AG04449 (cell line): ENCODE measurements at regions of chr3 and their contacts with region 1.

Region 1: GRCh38 chr3:141303481-141304223 is 64.7 kb upstream of the ZBTB38 start:
- DNase-seq: peak; percentile 41
- H3K4me3 ChIP-seq: no peak overlapping the region
- CTCF ChIP-seq: peak; percentile 49

Region 2: GRCh38 chr3:141039589-141039988 is 264.1 kb before region 1 on chr3:
- CTCF ChIA-PET with region 1: no interaction called
- POLR2A ChIA-PET with region 1: no interaction called
- DNase-seq: no peak
- H3K4me3 ChIP-seq: no peak overlapping the region
- CTCF ChIP-seq: no peak

Region 3: DNA sequence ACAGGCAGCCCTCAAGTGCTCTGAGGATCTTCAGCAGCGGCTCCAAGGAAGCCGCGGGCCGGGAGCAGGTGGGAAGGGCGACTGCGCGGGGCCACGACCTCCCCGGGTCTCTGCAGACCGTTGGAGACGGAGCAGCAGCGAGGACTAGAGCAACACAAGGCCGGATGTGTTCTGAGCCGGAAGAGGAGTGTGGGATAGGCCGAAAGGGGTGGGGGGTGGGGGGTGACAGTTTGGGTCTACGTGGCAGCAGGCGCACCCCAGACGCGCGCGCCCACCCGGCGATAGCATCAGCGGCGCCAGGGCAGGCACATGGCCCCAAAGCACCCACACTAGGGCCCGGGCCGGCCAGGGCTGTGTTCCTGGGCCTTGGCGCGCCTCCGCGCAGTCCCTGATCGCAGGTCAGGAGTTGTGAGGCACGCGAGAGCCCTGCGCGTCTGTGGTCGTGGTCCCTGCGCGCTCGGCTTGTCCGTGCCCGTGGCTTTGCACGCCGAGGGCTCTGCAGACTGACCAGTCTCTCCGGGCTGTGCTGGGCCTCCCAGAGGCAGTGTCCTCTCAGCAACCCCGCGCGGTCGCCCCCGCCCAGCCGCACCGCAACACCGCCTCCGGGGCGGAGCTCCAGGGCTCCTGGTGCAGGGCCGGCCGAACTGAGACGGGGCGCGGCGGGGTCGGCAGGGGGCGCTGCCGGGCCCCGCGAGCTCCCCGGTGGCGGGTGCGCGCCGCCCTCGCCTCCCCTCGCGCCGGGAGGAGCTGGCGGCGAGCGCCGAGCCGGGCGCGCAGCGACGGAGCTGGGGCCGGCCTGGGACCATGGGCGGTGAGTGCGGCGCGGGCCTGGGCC is 72.3 kb before region 1 on chr3 and contains the start of gene PXYLP1:
- CTCF ChIA-PET with region 1: interaction called, 44 read pairs
- POLR2A ChIA-PET with region 1: interaction called, 3 read pairs
- DNase-seq: no peak
- H3K4me3 ChIP-seq: peak within 1 kb of the TSS; percentile 71
- CTCF ChIP-seq: peak; percentile 57

Region 4: DNA sequence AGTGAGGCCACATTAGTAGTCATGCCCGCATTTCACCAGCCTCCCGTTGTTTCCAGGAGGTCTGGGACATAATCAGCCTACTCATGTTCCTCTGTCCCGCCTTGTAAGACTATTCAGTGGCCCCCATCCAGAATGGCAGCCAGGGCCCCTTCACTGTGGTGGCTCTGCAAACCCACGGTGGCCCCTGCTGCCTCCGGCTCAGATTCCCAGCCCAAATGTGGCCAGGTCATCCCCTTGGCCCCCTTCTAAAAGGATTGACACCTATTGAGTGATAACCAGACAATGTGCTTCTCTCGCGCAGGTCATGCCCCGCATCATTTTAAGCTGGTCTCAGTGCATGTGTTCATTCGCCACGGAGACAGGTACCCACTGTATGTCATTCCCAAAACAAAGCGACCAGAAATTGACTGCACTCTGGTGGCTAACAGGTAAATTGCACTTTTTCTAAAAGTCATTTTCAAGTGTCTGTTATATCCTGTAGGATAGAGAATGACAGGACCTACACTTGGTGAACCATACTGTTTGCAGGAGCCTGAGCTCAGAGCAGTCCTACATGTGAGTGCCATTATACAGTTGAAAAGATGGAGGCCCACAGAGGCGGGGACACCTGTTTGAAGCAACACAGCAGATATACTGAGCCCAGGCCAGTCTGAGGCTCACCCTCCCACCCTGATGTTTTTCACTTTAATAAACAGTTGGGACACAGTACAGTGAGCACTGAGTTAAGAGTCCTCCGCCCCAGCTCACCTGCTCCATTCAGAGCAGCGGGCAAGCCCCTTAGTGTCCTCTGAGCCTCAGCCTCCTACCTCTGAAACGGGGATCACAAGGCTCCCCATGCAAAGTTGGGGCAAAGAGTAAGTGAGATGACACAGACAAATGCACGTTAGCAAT is 24.3 kb before region 1 on chr3:
- CTCF ChIA-PET with region 1: interaction called, 40 read pairs
- POLR2A ChIA-PET with region 1: interaction called, 3 read pairs
- DNase-seq: no peak
- H3K4me3 ChIP-seq: no peak overlapping the region
- CTCF ChIP-seq: peak; percentile 31

Region 5: DNA sequence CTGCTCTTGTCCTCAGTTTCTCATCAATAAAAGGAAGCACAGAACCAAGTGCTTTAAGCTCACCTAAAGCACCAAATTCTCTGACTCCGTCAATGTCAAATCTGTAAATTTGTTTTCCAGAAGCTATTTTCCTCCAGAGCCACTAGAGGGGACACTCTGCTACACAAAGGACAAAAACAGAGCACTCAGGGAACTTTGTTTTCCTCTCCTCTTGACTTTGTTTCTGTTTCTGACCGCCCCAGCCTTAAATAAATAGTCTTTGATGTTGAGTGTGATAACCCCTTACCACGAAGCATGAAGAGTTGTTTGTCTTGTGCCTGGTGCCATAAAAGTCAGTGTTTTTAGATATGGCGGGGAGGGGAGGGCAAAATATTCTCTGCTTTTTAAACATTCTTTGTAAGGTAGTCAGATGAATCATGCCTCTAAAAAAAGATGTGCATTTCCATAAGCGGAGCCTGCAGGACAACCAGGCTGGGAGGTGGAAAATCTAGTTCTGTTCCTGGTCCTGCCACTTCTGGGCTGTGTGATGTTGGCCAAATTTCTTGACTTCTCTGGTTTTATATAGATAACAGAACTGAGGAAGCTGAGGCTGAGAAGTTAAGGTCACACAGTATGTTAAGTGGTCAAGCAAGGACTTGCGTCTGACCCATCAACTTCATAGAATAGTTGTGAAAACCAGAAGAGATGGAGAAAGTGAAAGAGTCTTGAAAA is 57.4 kb after region 1 on chr3:
- CTCF ChIA-PET with region 1: interaction called, 14 read pairs
- POLR2A ChIA-PET with region 1: no interaction called
- DNase-seq: peak; percentile 87
- H3K4me3 ChIP-seq: no peak overlapping the region; the same call in 1 of the 2 replicates
- CTCF ChIP-seq: peak; percentile 72

Region 6: GRCh38 chr3:141441381-141442364 is 138.0 kb after region 1 on chr3:
- CTCF ChIA-PET with region 1: interaction called, 14 read pairs
- POLR2A ChIA-PET with region 1: interaction called, 3 read pairs
- DNase-seq: peak; percentile 73
- H3K4me3 ChIP-seq: no peak overlapping the region
- CTCF ChIP-seq: peak; percentile 70

Region 7: DNA sequence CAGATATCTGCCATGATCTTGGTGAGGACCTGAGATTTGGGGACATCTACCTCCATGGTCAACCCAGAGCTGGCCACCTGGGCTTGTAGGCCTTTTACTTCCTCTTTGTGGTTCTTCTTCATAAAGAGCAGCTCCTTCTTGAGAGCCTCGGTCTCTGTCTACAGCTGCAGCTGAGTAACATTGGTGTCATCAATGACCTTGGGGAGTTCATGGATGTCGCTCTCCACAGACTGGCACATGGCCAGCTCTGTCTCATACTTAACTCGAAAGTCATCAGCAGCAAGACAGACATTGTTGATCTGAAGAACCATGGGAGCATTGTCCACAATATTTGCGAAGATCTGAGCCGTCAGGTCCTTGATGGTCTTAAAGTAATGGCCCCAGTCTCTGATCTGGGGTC is 167.5 kb after region 1 on chr3:
- CTCF ChIA-PET with region 1: interaction called, 14 read pairs
- POLR2A ChIA-PET with region 1: no interaction called
- DNase-seq: no peak
- H3K4me3 ChIP-seq: no peak overlapping the region
- CTCF ChIP-seq: no peak